Activated naive CD4-positive, alpha-beta T cell treated with anti-CD3 and anti-CD28 coated beads for 36 hours (primary cell): ENCODE measurements at regions of chr12 and their contacts with region 1.

Region 1: DNA sequence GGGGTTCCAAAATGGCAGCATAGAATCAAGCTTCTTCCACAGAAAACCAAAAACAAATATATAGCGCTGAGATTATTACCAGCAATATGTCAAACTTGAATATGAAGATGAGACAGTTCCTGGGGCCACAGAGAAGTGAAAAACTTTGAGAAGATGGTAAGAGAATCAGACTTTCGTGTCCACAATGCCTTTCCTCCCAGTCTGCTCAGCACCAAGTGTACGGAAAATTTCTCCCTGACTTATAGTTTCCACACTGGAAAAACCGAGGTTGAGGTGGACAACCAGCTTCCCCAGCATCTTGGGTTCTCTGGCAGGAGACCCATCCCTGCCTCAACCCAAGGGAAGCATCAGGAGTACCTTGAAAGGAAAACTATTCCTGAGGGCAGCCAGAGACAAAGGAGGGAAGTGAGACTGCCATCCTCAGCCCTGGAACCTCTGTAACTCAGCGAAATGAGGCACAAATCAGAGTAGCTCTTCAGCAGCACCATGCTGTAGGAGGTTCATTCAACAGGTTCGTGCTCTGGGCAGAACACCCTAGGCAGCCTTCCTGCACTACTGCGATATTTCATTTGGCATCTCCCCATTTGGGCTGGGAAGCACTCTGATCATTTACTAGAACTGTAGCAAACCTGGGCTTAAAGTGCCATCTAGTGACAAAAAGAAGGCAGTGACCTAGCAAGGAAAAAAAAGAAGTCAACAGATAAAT is 52.4 kb upstream of the CAPRIN2 start:
- DNase-seq: peak; percentile 12
- H3K4me3 Mint-ChIP-seq: no peak overlapping the region
- H3K27ac Mint-ChIP-seq: no peak overlapping the region
- H3K4me1 Mint-ChIP-seq: no peaks in the 10 kb centered on the region
- H3K27me3 Mint-ChIP-seq: peaks cover 14% of the 10 kb centered on the region

Region 2: GRCh38 chr12:29073628-29074239 is 1733.4 kb before region 1 on chr12:
- CTCF ChIA-PET with region 1: no interaction called
- intact Hi-C with region 1: loop called (anchors 5 kb)
- DNase-seq: peak; percentile 18
- H3K4me3 Mint-ChIP-seq: no peak overlapping the region
- H3K27ac Mint-ChIP-seq: no peak overlapping the region
- H3K4me1 Mint-ChIP-seq: no peaks in the 10 kb centered on the region
- H3K27me3 Mint-ChIP-seq: peaks cover 27% of the 10 kb centered on the region

Region 3: DNA sequence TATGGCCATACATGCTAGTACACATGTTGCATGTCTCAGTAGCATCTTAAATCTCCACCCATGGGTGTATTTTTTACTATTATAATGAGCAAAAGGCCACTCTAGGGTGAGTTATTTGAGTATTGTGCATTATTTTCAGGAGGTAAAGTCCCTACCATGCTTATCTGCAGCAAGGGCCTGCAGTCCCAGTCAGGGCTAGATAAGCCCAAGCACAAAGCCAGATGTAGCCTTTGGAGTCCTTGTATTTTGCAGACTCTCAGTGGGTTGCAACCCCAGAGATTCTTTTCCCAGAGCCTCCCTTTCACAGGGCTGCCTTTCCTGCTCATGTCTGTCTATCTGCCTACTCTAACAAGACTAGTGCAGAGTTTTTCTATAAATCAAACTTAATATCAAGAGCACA is 406.8 kb before region 1 on chr12:
- CTCF ChIA-PET with region 1: no interaction called
- intact Hi-C with region 1: no loop called
- DNase-seq: no peak
- H3K4me3 Mint-ChIP-seq: no peak overlapping the region
- H3K27ac Mint-ChIP-seq: no peak overlapping the region
- H3K4me1 Mint-ChIP-seq: no peaks in the 10 kb centered on the region
- H3K27me3 Mint-ChIP-seq: peaks cover 2% of the 10 kb centered on the region